ENCODE measurements at regions of chr9 and their contacts with region 1.

Region 1: DNA sequence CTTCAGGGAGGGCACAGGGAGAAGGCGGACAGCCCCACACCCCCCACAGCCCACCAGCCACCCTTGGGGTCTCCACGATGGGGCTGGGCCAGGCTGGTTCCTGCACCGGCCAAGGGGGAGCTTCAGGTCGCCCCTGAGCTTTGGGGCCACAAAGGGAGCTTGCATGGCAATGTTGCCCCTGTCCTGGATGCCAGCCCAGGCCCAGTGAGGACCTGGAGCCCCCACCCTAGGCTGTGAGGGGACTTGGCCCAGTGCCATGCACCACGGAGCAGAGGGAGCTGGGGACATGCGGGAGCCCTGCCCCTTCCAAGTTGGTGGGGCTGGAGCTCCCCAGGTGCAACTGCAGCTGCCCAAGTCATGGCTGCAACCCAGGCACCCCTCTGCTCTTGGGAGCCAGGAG is 18.4 kb downstream of the TMEM38B start:
- DNase-seq: no peak

Region 2: DNA sequence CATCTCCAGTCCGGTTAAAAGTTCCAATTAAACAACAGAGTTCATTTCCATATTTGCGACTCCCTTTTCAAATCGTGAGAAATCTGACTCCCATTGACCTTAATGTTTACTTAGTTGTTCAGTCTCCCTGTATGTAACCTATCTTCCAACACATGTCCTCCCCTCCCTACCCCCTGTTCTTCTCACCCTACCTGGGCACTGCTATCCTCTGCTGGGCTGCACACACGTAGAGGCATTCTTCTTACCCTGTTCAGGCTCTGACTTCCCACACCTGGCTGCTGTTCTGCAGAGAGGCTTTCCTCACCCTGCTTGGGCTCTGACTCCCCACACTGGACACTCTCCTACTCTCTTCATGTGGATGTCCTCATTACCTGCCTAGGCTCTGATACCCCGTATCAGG is 102.4 kb before region 1 on chr9:
- intact Hi-C with region 1: loop called (anchors 5 kb)
- DNase-seq: no peak

Region 3: GRCh38 chr9:105656131-105656921 is 56.4 kb before region 1 on chr9:
- intact Hi-C with region 1: loop called (anchors 10 kb)
- DNase-seq: peak in 4 of 10 donors; percentile 10 to 86 (median 35)